ENCODE measurements at regions of chr20 and their contacts with region 1.

Region 1: DNA sequence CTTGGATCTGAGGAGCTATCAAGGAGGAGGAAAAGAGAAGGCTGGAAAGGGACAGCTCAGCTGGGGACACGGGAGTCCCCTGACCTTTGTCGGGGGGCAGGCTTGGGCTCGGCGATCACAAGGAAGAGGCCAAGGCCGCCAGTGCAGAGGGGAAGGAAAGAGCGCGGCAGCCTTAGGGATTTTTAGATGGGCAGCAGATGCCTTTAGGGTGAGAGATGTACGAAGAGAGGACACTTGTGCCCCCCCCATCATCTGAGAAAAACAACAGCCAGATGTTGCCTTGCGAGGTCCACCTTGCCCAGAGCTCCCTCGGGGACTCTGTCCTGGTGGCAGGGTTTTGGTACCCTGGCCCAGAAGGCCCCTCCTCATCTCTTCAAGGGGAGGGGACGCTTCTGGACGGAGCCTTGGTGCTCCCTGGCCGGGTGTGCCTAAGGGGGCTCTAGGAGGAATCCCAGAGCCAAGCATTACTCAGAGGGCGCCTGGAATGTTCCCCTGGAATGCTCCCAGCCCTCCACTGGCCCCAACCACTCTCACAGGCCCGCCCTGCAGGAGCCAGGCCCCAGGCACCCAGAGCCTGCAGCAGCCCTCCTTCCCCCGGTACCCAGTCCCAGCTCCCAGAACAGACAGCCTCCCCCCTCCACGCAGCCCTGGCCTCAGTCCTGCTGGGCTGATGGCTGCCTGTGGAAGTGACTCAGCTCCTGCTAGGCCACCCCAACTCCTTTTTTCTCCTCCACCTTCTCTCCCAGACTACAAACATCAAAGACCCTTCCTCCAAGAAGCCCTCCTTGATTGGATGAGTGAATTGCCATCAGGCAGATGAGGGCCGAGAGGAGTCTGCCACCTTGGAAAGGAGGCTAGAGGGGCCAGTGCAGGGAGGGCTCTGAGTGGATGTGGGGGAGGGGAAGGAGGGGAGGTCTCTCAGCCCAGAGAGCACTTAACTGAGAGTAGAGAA is 1.8 kb downstream of the ADAM33 start:
- DNase-seq: no peak
- H3K4me3 ChIP-seq: peak overlapping the region; percentile 57 to 74
- H3K27ac ChIP-seq: peak overlapping the region; percentile 89
- H3K4me1 ChIP-seq: peaks cover 39% of the 10 kb centered on the region
- H3K27me3 ChIP-seq: no peaks in the 10 kb centered on the region
- CTCF ChIP-seq: no peak
- POLR2A ChIP-seq: peak in 1 of 2 donors; percentile 30

Region 2: GRCh38 chr20:3710703-3711483 is 30.9 kb after region 1 on chr20:
- intact Hi-C with region 1: loop called (anchors 1 kb)
- DNase-seq: peak in 1 of 2 donors; percentile 83
- H3K4me3 ChIP-seq: no peak overlapping the region
- H3K27ac ChIP-seq: peak overlapping the region; percentile 25
- H3K4me1 ChIP-seq: peaks cover 14% of the 10 kb centered on the region
- H3K27me3 ChIP-seq: no peaks in the 10 kb centered on the region
- CTCF ChIP-seq: peak; percentile 93 to 98 (median 97)
- POLR2A ChIP-seq: no peak

Region 3: GRCh38 chr20:3777716-3778629 is 97.9 kb after region 1 on chr20:
- intact Hi-C with region 1: loop called (anchors 5 kb)
- DNase-seq: peak in 1 of 2 donors; percentile 86
- H3K4me3 ChIP-seq: peak overlapping the region; percentile 51 to 61
- H3K27ac ChIP-seq: peak overlapping the region; percentile 17
- H3K4me1 ChIP-seq: peaks cover 38% of the 10 kb centered on the region
- H3K27me3 ChIP-seq: no peaks in the 10 kb centered on the region
- CTCF ChIP-seq: no peak
- POLR2A ChIP-seq: no peak

Measured in vagina (tissue), 2 donors.